Heart right ventricle (tissue), 16 donors: ENCODE measurements at regions of chr6 and their contacts with region 1.

Region 1: DNA sequence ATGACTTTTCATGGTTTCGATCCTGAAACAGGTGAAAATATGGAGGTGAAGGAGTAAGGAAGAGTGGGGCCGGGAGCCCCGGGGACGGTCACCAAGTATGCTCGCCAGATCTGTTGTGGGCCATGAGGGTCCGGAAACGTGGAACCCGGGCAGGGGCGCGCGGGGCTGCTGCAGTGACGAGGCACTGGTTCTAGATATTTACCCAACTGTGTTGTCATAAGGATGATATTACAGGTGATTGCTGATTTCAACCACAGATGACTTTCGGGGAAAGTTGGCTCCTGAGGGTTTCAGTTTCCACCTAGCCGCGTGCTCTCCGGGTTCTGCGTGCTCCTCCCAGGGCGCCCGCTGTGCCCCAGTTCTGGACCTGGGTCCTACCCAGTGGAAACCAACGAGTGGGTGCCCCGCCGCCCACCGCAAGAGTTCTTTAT is 12.2 kb downstream of the RAET1G start:
- DNase-seq: no peak
- ATAC-seq: no peak
- H3K4me3 ChIP-seq: no peak overlapping the region
- H3K27ac ChIP-seq: no peak overlapping the region
- H3K4me1 ChIP-seq: peaks cover 0 to 6% (median 4%) of the 10 kb centered on the region in 9 donors
- H3K27me3 ChIP-seq: no peaks in the 10 kb centered on the region
- CTCF ChIP-seq: no peak

Region 2: DNA sequence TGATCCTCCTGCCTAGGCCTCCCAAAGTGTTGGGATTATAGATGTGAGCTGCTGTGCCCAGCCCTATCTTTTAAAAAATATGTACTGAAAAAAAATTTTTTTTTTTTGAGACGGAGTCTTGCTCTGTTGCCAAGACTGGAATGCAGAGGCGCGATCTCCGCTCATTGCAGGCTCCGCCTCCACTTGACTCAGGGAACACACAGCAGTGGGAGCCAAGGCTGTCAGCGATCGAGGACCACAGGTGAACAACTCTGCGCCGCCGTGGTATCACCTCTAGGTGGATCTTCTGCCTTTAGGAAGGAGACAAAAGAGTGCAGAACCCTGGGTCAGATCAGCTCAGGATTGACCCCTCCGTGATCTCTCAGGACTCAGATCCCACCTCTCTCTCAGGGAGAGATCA is 26.5 kb before region 1 on chr6:
- intact Hi-C with region 1: loop called in 1 of 10 experiments (anchors 2 kb)
- DNase-seq: no peak
- ATAC-seq: peak in 5 of 8 donors; percentile 37 to 56 (median 47)
- H3K4me3 ChIP-seq: peak overlapping the region in 1 of 10 donors; percentile 3
- H3K27ac ChIP-seq: no peak overlapping the region
- H3K4me1 ChIP-seq: peaks cover 0 to 5% (median 0%) of the 10 kb centered on the region in 9 donors
- H3K27me3 ChIP-seq: no peaks in the 10 kb centered on the region
- CTCF ChIP-seq: no peak